ENCODE measurements at regions of chr15 and their contacts with region 1.

Region 1: GRCh38 chr15:30670056-30670455 is 44.1 kb downstream of the ARHGAP11B start:
- DNase-seq: no peak
- ATAC-seq: no peak
- H3K4me3 ChIP-seq: no peak overlapping the region
- H3K27ac ChIP-seq: no peak overlapping the region
- H3K4me1 ChIP-seq: no peaks in the 10 kb centered on the region
- H3K27me3 ChIP-seq: no peaks in the 10 kb centered on the region
- CTCF ChIP-seq: no peak

Region 2: GRCh38 chr15:30872341-30872748 is 202.3 kb after region 1 on chr15:
- intact Hi-C with region 1: loop called in 1 of 10 experiments (anchors 10 kb)
- DNase-seq: no peak
- ATAC-seq: no peak
- H3K4me3 ChIP-seq: no peak overlapping the region
- H3K27ac ChIP-seq: no peak overlapping the region
- H3K4me1 ChIP-seq: no peaks in the 10 kb centered on the region
- H3K27me3 ChIP-seq: no peaks in the 10 kb centered on the region
- CTCF ChIP-seq: no peak

Region 3: DNA sequence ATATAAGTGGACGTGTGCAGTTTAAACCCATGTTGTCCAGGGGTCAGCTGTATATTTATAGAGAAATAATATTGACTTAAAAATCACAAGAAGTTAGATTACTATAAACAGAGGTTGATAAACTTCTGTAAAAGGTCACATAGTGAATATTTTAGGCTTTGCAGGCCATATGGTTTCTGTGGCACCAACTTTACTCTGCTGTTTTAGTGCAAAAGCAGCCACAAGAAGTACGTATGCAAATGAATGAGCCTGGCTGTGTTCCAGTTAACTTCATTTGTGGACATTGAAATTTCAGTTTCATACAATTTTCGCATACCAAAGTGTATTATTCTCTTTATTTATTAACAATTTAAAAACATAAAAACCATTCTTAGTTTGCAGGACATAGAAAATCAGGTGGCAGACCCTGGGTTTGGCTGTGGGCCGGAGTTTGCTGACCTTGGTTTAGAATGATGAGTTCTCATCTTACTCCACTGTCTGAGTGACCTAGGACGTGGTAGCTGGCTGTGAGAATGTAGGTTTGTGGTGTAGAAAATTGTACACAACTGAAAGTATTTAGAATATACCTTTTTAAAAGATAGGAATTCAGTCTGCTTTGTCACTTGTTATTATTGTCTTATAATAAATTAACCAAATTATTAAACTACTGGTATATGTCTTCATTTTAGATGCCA is 250.0 kb after region 1 on chr15:
- intact Hi-C with region 1: no loop called
- DNase-seq: no peak
- ATAC-seq: no peak
- H3K4me3 ChIP-seq: no peak overlapping the region
- H3K27ac ChIP-seq: no peak overlapping the region
- H3K4me1 ChIP-seq: peaks cover 0 to 61% (median 37%) of the 10 kb centered on the region in 9 donors
- H3K27me3 ChIP-seq: no peaks in the 10 kb centered on the region
- CTCF ChIP-seq: no peak

Measured in heart right ventricle (tissue), 16 donors.